ENCODE measurements at regions of chr5 and their contacts with region 1.

Region 1: GRCh38 chr5:147188200-147189108 is 46.4 kb upstream of the STK32A start:
- DNase-seq: peak; percentile 19
- H3K4me3 Mint-ChIP-seq: no peak overlapping the region
- H3K27ac Mint-ChIP-seq: no peak overlapping the region
- H3K4me1 Mint-ChIP-seq: peaks cover 3% of the 10 kb centered on the region
- H3K27me3 Mint-ChIP-seq: peaks cover 6% of the 10 kb centered on the region

Region 2: GRCh38 chr5:146533260-146533857 is 655.1 kb before region 1 on chr5:
- CTCF ChIA-PET with region 1: interaction called, 81 read pairs
- POLR2A ChIA-PET with region 1: no interaction called
- intact Hi-C with region 1: loop called (anchors 1 kb)
- DNase-seq: peak; percentile 83
- H3K4me3 Mint-ChIP-seq: no peak overlapping the region
- H3K27ac Mint-ChIP-seq: no peak overlapping the region
- H3K4me1 Mint-ChIP-seq: peaks cover 4% of the 10 kb centered on the region
- H3K27me3 Mint-ChIP-seq: peaks cover under 1% of the 10 kb centered on the region

Region 3: GRCh38 chr5:146541958-146542849 is 646.2 kb before region 1 on chr5:
- CTCF ChIA-PET with region 1: interaction called, 25 read pairs
- POLR2A ChIA-PET with region 1: no interaction called
- intact Hi-C with region 1: no loop called
- DNase-seq: peak; percentile 79
- H3K4me3 Mint-ChIP-seq: no peak overlapping the region
- H3K27ac Mint-ChIP-seq: no peak overlapping the region
- H3K4me1 Mint-ChIP-seq: peaks cover 2% of the 10 kb centered on the region
- H3K27me3 Mint-ChIP-seq: no peaks in the 10 kb centered on the region

Region 4: GRCh38 chr5:147098233-147098790 is 90.1 kb before region 1 on chr5:
- CTCF ChIA-PET with region 1: interaction called, 43 read pairs
- POLR2A ChIA-PET with region 1: no interaction called
- intact Hi-C with region 1: loop called (anchors 1 kb)
- DNase-seq: peak; percentile 9
- H3K4me3 Mint-ChIP-seq: no peak overlapping the region
- H3K27ac Mint-ChIP-seq: no peak overlapping the region
- H3K4me1 Mint-ChIP-seq: no peaks in the 10 kb centered on the region
- H3K27me3 Mint-ChIP-seq: peaks cover 3% of the 10 kb centered on the region

Region 5: DNA sequence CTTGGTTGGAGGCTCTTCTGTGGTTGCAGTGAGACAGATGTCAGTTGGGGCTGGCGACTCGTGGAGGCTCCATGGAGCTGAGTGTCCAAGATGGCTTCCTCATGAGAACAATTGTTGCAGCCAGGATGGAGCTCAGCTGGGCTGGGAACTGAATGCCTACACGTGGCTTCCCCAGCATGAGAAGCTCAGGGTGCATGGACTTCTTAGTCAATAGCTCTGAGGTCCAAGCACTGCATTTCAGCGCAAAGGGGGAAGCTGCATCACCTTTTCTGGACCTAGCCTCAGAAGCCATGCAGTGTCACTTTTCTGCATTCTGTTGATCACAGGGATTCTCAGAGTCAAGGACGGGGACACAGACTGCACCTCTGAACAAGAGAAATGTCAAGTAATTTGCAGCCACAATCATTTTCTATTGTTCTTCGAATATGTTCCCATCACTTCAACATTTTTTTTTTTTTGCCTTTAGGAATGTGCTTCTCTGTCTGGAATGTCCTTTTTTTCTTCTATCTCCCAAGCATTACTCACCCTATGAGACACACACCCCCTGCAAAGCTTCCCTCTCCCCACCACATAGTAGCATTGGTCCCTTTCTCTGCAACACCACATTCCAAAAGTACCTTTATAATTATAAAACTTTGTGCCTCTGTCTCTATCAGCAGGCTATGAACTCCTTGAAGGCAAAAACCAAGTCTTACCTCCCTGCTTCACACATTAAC is 11.2 kb before region 1 on chr5:
- CTCF ChIA-PET with region 1: interaction called, 17 read pairs
- POLR2A ChIA-PET with region 1: no interaction called
- intact Hi-C with region 1: no loop called
- DNase-seq: no peak
- H3K4me3 Mint-ChIP-seq: no peak overlapping the region
- H3K27ac Mint-ChIP-seq: no peak overlapping the region
- H3K4me1 Mint-ChIP-seq: no peaks in the 10 kb centered on the region
- H3K27me3 Mint-ChIP-seq: no peaks in the 10 kb centered on the region

Region 6: DNA sequence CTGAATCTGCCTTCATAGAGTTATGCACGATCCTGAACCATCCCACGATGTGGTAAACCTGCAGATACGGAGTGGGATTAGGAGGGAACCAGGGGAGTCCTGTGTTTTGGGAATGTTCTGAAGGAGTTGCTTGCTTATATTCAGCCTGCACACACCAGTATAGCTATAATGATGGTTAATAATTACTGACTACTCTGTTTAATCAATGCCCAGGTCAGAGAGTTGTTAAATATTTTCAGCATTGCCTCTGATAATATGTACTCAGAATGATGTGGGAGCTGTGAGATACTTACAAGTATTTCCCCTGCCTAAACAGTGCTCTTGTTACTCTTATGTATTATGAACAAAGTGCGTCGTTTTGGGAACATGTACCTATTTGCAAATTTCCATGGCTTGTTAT is 11.5 kb after region 1 on chr5:
- CTCF ChIA-PET with region 1: interaction called, 21 read pairs
- POLR2A ChIA-PET with region 1: no interaction called
- intact Hi-C with region 1: no loop called
- DNase-seq: no peak
- H3K4me3 Mint-ChIP-seq: no peak overlapping the region
- H3K27ac Mint-ChIP-seq: no peak overlapping the region
- H3K4me1 Mint-ChIP-seq: no peaks in the 10 kb centered on the region
- H3K27me3 Mint-ChIP-seq: no peaks in the 10 kb centered on the region

Region 7: GRCh38 chr5:147935032-147935431 is 746.6 kb after region 1 on chr5:
- CTCF ChIA-PET with region 1: no interaction called
- POLR2A ChIA-PET with region 1: no interaction called
- intact Hi-C with region 1: no loop called
- DNase-seq: no peak
- H3K4me3 Mint-ChIP-seq: no peak overlapping the region
- H3K27ac Mint-ChIP-seq: no peak overlapping the region
- H3K4me1 Mint-ChIP-seq: no peaks in the 10 kb centered on the region
- H3K27me3 Mint-ChIP-seq: no peaks in the 10 kb centered on the region